Heart right ventricle (tissue), 16 donors: ENCODE measurements at regions of chrX and their contacts with region 1.

Region 1: GRCh38 chrX:155211206-155211605 is 5.1 kb upstream of the VBP1 start:
- DNase-seq: no peak
- ATAC-seq: no peak
- H3K4me3 ChIP-seq: no peak overlapping the region
- H3K27ac ChIP-seq: no peak overlapping the region
- H3K4me1 ChIP-seq: peaks cover 0 to 5% (median 0%) of the 10 kb centered on the region in 9 donors
- H3K27me3 ChIP-seq: no peaks in the 10 kb centered on the region
- CTCF ChIP-seq: no peak

Region 2: GRCh38 chrX:153818571-153819383 is 1392.4 kb before region 1 on chrX:
- intact Hi-C with region 1: loop called in 1 of 10 experiments (anchors 5 kb)
- DNase-seq: peak in 1 of 2 donors; percentile 60
- ATAC-seq: peak; percentile 61 to 89 (median 78)
- H3K4me3 ChIP-seq: peak overlapping the region; percentile 32 to 57 (median 50)
- H3K27ac ChIP-seq: peak overlapping the region in 5 of 10 donors; percentile 6 to 53 (median 34)
- H3K4me1 ChIP-seq: peaks cover 0 to 7% (median 0%) of the 10 kb centered on the region in 9 donors
- H3K27me3 ChIP-seq: peaks cover 0 to 76% (median 0%) of the 10 kb centered on the region in 7 donors
- CTCF ChIP-seq: no peak